Right cardiac atrium (tissue), 5 donors: ENCODE measurements at regions of chr20 and their contacts with region 1.

Region 1: DNA sequence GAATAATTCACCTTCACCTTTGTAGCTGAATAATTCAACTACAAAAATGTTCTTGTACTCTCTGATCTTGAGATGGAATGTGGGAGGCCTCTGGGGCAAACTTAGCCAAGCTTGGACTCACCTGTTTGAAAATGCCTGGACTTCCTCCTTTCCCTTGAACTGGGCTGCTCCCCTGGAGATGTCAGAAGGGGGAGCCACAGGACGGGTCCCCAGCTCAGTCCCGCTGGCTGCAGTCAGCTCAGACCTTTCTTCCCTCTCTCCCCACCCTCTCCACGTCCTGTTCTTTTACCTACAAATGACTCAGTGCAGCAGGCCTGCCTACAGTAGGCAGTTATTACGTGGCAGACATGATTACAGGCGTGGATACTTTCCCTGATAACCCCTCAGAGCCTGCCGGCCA is 131.5 kb upstream of the RALGAPA2 start:
- DNase-seq: no peak
- ATAC-seq: no peak
- H3K4me3 ChIP-seq: no peak overlapping the region
- H3K27ac ChIP-seq: no peak overlapping the region
- H3K4me1 ChIP-seq: no peaks in the 10 kb centered on the region
- H3K27me3 ChIP-seq: no peaks in the 10 kb centered on the region

Region 2: DNA sequence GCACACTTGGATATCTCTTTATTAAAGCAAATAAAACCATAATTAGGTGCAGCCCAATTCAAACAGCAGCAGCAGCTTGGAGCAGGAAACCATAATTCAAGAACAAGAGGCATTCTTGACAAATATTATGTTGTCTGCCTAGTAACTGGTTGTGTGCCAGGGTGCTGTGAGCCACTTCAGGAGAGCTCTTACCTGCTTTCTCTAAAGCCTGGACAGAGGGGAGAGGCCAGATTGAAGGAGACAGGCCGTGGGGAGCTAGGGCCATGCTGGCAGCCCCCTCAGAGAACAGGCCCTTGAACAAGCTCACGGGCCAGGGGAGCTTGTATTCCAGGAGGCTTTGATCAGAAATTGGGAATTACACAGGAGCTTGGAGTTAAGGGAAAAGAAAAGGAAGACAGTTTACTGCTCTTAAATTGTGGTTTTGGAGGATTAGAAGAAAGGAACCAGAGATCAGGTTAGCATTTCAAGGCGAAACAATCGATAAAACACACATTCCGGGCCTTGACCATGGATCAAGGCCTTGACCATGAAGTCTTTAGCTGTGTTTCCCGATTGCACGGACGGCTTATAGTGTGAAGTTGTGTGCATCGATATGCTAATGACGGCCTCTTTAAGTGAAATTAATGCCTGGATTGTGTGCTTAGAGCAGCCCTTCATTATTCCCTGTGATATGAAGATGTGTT is 739.6 kb after region 1 on chr20:
- intact Hi-C with region 1: loop called in 1 of 4 experiments (anchors 10 kb)
- DNase-seq: no peak
- ATAC-seq: no peak
- H3K4me3 ChIP-seq: no peak overlapping the region
- H3K27ac ChIP-seq: no peak overlapping the region
- H3K4me1 ChIP-seq: no peaks in the 10 kb centered on the region
- H3K27me3 ChIP-seq: peaks cover 2% of the 10 kb centered on the region